HEK293 (cell line): ENCODE measurements at regions of chr10 and their contacts with region 1.

Region 1: GRCh38 chr10:87531908-87532622 is 27.4 kb downstream of the MINPP1 start:
- H3K4me3 ChIP-seq: no peak overlapping the region
- H3K27ac ChIP-seq: no peak overlapping the region
- H3K4me1 ChIP-seq: 0 out of 2 replicates have a peak, but pooled peaks cover 4% of the 10 kb centered on the region
- CTCF ChIP-seq: no peak

Region 2: DNA sequence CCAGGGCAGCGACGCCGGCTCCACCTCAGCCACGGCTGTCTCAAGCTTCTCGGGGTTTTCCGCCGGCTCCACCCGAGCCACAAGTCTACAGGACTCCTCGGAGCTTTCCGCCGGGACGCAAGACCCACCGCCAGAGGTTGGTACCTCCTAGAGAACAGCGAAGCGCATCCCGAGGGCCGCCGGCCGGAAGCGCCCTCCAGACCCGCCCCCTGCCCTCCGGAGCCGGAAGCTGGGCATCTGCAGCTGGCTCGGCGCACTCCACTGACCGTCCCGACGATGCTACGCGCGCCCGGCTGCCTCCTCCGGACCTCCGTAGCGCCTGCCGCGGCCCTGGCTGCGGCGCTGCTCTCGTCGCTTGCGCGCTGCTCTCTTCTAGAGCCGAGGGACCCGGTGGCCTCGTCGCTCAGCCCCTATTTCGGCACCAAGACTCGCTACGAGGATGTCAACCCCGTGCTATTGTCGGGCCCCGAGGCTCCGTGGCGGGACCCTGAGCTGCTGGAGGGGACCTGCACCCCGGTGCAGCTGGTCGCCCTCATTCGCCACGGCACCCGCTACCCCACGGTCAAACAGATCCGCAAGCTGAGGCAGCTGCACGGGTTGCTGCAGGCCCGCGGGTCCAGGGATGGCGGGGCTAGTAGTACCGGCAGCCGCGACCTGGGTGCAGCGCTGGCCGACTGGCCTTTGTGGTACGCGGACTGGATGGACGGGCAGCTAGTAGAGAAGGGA is 27.3 kb before region 1 on chr10 and contains the start of gene MINPP1:
- CTCF ChIA-PET with region 1: interaction called, 11 read pairs
- POLR2A ChIA-PET with region 1: no interaction called
- H3K4me3 ChIP-seq: peak within 1 kb of the TSS; percentile 99
- H3K27ac ChIP-seq: peak within 1 kb of the TSS; percentile 85
- H3K4me1 ChIP-seq: peaks cover 4% of the 10 kb centered on the region; the same call in 1 of the 2 replicates
- CTCF ChIP-seq: no peak

Region 3: GRCh38 chr10:87842776-87843497 is 310.9 kb after region 1 on chr10:
- CTCF ChIA-PET with region 1: no interaction called
- POLR2A ChIA-PET with region 1: no interaction called
- H3K4me3 ChIP-seq: no peak overlapping the region
- H3K27ac ChIP-seq: no peak overlapping the region
- H3K4me1 ChIP-seq: peaks cover 7% of the 10 kb centered on the region
- CTCF ChIP-seq: no peak